Prostate gland (tissue), 2 donors: ENCODE measurements at regions of chr17 and their contacts with region 1.

Region 1: DNA sequence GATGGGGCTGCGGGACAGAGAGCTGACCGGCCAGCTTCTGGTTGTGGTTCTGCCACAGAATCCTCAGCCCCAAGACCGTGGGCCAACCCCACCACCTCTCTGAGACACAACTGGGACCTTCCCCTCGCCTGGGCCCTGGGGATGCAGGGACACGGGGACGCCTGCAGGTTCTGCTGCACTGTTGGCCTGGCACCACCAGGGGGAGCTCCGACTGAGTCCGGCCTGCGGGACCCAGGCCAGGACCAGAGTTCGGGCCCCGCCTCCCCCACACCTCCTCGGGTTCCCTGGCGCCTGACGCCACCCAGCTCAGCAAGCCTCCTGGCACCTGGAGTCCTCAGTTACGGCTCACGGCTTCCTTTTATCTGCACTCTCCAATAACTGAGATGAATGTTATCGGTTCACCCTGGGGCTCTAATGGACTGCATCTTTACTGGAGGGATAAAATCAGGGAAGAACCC is 27.3 kb downstream of the TBC1D16 start:
- DNase-seq: peak; percentile 86
- H3K4me3 ChIP-seq: no peak overlapping the region
- H3K27ac ChIP-seq: peak overlapping the region; percentile 63 to 68
- H3K4me1 ChIP-seq: peaks cover 9% of the 10 kb centered on the region
- H3K27me3 ChIP-seq: no peaks in the 10 kb centered on the region
- CTCF ChIP-seq: peak; percentile 98 to 99 (median 99)
- POLR2A ChIP-seq: no peak

Region 2: GRCh38 chr17:80025140-80025539 is 16.7 kb after region 1 on chr17:
- intact Hi-C with region 1: no loop called
- DNase-seq: peak; percentile 62
- H3K4me3 ChIP-seq: peak overlapping the region in 1 of 2 donors; percentile 4
- H3K27ac ChIP-seq: peak overlapping the region; percentile 60 to 88
- H3K4me1 ChIP-seq: peaks cover 32% of the 10 kb centered on the region
- H3K27me3 ChIP-seq: no peaks in the 10 kb centered on the region
- CTCF ChIP-seq: no peak
- POLR2A ChIP-seq: no peak

Region 3: DNA sequence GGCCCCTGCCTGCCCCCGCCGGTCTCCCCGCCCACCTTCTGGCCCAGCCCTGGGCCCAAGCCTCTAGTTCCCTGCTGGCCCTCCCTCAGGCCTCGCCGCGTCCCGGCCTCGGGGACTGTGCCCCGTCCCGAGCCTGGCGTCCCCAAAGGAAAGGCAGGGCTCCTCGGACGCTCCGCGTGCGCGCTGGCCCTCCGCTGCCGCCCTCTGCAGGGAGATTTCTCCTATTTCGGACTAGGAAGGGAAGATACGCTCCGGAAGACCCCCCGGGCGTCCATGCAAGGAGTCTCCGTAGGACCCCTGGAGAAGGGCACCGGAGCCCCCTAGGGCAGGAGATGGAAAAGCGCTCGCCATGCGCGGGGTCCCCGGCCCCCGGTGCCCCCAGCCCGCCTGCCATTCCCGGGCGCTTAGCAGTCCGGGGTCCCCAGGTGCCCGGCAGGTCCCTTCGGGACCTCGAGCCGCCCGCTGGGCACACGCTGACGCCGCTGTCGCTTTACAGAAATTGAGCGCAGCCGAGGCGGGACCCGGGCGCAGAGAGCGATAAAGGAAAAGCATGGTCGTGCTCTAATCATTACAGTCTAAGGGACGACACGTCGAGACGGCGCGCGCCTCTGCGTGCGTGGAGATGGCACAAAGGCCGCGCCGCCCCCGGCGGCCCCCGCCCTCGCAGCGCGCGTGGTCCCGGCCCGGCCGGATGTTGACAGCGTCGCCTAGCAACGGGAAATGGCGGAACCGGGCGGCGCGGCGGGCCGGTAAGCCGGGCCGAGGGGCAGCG is 27.7 kb after region 1 on chr17 and contains the start of gene CCDC40:
- intact Hi-C with region 1: no loop called
- DNase-seq: peak; percentile 79
- H3K4me3 ChIP-seq: peak within 1 kb of the TSS; percentile 47 to 55
- H3K27ac ChIP-seq: peak within 1 kb of the TSS; percentile 82 to 91
- H3K4me1 ChIP-seq: peaks cover 5% of the 10 kb centered on the region
- H3K27me3 ChIP-seq: no peaks in the 10 kb centered on the region
- CTCF ChIP-seq: peak in 1 of 4 experiments; percentile 4
- POLR2A ChIP-seq: peak; percentile 74
- total RNA-seq, gene CCDC40: 11.8 to 19.7 TPM

Region 4: DNA sequence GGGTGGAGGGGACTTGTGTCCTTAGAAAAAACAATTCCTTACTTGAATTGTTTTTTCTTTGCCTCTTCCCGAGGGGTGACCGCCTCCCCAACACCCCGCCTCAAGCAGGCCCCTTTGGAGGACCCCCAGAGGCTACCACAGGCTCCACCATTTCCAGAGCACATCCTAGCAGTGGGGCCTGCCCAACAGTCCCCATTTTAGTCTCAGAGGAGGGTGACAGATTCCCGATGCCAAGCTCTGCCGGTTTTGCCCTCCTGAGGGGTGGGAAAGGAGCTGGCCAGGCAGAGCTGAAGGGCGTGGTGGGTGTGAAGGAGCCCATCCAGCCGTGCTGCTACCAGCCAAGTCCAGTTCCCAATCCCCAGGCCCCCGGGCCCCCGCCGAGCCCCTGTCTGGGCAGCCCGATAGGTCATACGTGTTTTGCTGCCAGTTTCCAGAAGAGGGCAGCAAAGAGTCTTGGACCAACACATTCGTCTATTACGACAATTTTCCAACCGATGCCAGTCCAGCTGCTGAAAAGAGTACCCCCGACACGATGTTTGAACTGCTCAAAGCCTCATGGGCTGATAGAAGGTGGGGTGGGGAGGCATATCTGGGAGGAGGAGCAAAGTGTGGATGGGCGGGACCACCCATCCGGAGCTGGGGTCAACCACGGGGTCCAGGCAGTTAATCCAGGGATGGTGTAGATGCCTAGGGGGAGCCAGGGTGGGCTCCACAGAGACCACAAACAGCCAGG is 74.2 kb after region 1 on chr17:
- intact Hi-C with region 1: loop called (anchors 5 kb)
- DNase-seq: peak; percentile 60
- H3K4me3 ChIP-seq: no peak overlapping the region
- H3K27ac ChIP-seq: no peak overlapping the region
- H3K4me1 ChIP-seq: no peaks in the 10 kb centered on the region
- H3K27me3 ChIP-seq: no peaks in the 10 kb centered on the region
- CTCF ChIP-seq: peak; percentile 65 to 77 (median 72)
- POLR2A ChIP-seq: no peak

Region 5: GRCh38 chr17:80152081-80152990 is 143.9 kb after region 1 on chr17:
- intact Hi-C with region 1: loop called (anchors 5 kb)
- DNase-seq: no peak
- H3K4me3 ChIP-seq: no peak overlapping the region
- H3K27ac ChIP-seq: no peak overlapping the region
- H3K4me1 ChIP-seq: no peaks in the 10 kb centered on the region
- H3K27me3 ChIP-seq: no peaks in the 10 kb centered on the region
- CTCF ChIP-seq: no peak
- POLR2A ChIP-seq: no peak

Region 6: DNA sequence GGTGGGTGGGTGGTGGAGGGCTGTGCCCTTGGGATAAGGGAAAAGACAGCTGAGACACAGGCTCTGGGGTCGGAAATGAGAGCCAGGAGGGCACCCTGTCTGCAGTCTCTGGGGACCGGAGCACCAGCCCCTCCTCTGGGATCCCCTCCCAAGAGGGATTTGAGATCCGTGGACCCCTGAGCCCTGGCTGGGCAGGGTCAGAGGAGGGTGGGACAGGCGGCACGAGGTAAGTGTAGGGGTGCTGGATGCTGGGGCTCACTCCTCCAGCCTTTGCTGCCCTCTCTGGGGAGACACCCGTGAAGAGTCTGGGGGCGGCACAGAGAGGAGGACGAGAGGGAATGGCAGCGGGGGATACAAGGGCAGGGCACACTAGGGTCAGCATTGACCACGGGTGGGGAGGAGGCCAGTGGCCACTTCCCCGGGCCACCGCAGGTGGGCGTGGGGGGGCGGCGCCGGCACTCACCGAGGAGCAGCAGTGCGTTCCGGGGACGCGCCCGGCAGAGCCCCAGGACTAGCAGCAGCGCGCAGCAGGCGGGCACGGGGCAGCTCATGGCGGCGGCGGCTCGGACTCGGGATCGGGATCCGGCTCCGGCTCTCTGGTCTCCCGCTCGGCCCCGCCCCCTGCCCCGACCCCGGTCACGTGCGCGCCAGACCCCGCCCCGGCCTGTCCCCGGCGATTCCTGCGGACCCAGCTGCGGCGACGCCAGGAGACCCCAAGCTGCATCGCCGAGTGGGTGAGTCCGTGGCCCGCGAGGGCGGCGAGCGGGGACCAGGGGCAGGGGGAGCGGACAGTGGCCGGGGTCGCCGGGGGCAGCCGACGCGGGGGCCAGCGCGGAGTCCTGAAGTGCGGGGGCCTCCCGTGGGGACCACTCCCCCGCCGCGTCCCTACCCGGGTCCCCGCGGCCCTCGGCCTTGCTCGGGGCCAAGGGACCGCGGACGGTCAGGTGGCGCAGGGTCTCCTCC is 211.6 kb after region 1 on chr17 and contains the starts of genes SGSH and SLC26A11:
- intact Hi-C with region 1: loop called (anchors 10 kb)
- DNase-seq: peak; percentile 79
- H3K4me3 ChIP-seq: peak within 1 kb of the TSS; percentile 96 to 97
- H3K27ac ChIP-seq: peak within 1 kb of the TSS; percentile 82 to 91
- H3K4me1 ChIP-seq: peaks cover 4% of the 10 kb centered on the region
- H3K27me3 ChIP-seq: no peaks in the 10 kb centered on the region
- CTCF ChIP-seq: peak in 1 of 4 experiments; percentile 19
- POLR2A ChIP-seq: peak; percentile 68
- total RNA-seq, gene SGSH: 41.2 to 95.7 TPM
- total RNA-seq, gene SLC26A11: 16.9 to 32.4 TPM

Region 7: DNA sequence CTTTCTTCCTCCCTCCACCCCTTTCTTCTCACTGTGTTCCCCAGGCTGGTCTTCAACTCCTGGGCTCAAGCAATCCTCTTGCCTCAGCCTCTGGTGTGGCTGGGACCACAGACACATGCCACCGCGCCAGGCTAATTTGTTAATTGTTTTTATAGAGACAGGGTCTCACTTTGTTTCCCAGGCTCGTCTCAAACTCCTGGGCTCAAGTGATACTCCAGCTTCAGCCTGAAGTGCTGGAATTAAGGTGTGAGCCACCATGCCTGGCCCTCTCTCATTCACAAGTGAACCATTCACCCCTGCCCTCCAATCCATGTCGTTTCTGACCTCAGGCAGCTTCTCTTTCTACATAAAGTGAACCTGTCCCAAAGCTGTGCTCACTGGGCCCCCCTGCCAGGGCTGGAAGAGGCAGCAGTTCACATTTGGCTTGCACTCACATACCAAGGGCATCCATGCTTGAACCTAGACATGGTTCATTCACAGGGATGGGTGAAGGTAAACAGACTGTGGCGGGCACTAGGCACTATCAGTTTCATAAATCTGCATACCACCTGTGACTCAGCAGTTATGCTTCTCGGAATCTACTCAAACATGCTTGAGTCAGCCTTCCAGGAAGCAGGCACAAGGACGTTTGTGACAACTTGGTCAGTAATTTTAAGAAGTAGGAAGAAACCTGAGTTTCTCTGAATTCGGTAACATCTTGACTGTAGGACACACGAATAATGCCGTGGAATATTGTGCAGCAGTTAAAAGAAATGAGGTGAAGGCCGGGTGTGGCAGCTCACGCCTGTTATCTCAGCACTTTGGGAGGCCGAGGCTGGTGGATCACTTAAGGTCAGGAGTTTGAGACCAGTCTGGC is 246.2 kb after region 1 on chr17:
- intact Hi-C with region 1: loop called (anchors 10 kb)
- DNase-seq: peak; percentile 82
- H3K4me3 ChIP-seq: no peak overlapping the region
- H3K27ac ChIP-seq: peak overlapping the region; percentile 21 to 74
- H3K4me1 ChIP-seq: peaks cover 6% of the 10 kb centered on the region
- H3K27me3 ChIP-seq: no peaks in the 10 kb centered on the region
- CTCF ChIP-seq: no peak
- POLR2A ChIP-seq: peak; percentile 41

Region 8: DNA sequence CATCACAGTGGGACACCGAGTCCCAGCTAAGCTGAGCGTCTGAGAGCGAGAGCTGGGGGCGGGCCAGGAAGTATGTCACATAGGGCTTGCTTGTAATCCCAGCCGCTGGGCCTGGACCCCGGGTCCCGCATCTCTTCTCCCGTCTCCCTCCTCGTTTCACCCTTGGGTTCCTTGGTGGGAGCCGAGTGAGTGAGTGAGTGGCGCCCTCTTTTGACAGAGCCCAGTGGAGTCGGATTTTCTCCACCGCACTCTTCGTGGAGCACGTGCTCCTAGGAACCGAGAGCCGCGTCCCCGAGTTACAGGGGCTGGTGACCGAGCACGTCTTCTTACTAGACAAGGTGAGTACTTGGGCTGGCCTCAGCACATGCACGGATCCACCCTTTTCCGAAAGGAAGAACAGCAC is 355.8 kb after region 1 on chr17:
- intact Hi-C with region 1: loop called (anchors 5 kb)
- DNase-seq: no peak
- H3K4me3 ChIP-seq: no peak overlapping the region
- H3K27ac ChIP-seq: no peak overlapping the region
- H3K4me1 ChIP-seq: no peaks in the 10 kb centered on the region
- H3K27me3 ChIP-seq: no peaks in the 10 kb centered on the region
- CTCF ChIP-seq: peak in 1 of 4 experiments; percentile 37
- POLR2A ChIP-seq: no peak